ENCODE measurements at regions of chr9 and their contacts with region 1.

Region 1: DNA sequence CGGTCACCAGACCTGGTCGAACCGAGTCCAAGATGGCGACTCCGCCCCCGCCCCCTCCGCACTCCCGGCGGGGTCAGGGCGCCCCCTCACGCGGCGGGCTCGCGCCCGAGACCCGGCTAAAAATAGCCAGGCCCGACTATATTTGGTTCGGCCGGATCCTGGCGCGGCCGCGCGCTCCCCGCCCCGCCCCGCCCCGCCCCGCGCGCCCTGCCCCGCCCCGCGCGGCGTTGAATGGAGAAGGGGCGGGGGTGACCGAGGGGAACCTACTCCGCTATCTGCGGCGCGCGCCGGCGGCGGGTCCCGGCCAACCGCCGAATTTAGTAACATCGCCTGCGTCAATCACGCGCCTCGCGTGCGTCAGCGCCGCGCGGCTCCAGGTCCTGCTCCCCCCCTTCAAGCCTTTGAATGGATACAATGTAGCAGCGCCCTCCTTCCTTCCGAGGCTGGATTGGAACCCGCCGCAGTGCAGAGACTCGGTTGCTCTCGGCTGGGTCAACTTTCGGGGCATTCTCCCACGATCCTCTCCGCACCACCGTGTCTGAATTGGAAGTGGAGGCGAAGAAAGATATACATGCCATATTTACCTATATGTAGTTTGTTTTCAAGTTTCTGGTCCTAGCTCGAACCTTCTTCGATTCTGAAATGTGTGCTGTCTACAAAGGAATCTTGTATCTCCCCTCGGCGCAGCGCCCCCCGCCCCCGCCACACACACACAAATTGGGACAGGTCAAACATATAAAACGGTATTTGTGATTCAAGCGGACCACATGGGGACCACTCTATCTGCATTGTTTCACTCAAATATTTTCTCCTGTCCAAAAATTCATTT is 1.6 kb upstream of the NR4A3 start:
- DNase-seq: peak; percentile 94 to 95
- ATAC-seq: peak; percentile 67 to 80 (median 73)
- H3K4me3 ChIP-seq: peak overlapping the region; percentile 67 to 90 (median 82)
- H3K27ac ChIP-seq: peak overlapping the region; percentile 84 to 100 (median 98)
- H3K4me1 ChIP-seq: peaks cover 5 to 54% (median 32%) of the 10 kb centered on the region in 9 donors
- H3K27me3 ChIP-seq: peaks cover 0 to 30% (median 9%) of the 10 kb centered on the region in 7 donors
- CTCF ChIP-seq: peak in 5 of 9 donors; percentile 8 to 47 (median 34)

Region 2: GRCh38 chr9:99221621-99222415 is 598.3 kb before region 1 on chr9 and contains the starts of genes ALG2 and SEC61B:
- intact Hi-C with region 1: loop called in 1 of 10 experiments (anchors 10 kb)
- DNase-seq: peak; percentile 93 to 97
- ATAC-seq: peak; percentile 98 to 99 (median 99)
- H3K4me3 ChIP-seq: peak within 1 kb of the TSS; percentile 65 to 97 (median 88)
- H3K27ac ChIP-seq: peak within 1 kb of the TSS; percentile 87 to 96 (median 93)
- H3K4me1 ChIP-seq: peaks cover 14 to 85% (median 72%) of the 10 kb centered on the region in 9 donors
- H3K27me3 ChIP-seq: no peaks in the 10 kb centered on the region
- CTCF ChIP-seq: peak in 1 of 9 donors; percentile 21
- total RNA-seq, gene ALG2: 10.6 to 27.3 (median 15.0) TPM
- total RNA-seq, gene SEC61B: 24.1 to 72.6 (median 32.9) TPM

Region 3: GRCh38 chr9:99368341-99369323 is 451.4 kb before region 1 on chr9:
- intact Hi-C with region 1: loop called in 2 of 10 experiments (anchors 10 kb)
- DNase-seq: peak; percentile 62 to 80
- ATAC-seq: peak; percentile 92 to 98 (median 96)
- H3K4me3 ChIP-seq: peak overlapping the region in 9 of 10 donors; percentile 31 to 60 (median 51)
- H3K27ac ChIP-seq: peak overlapping the region; percentile 80 to 94 (median 85)
- H3K4me1 ChIP-seq: peaks cover 0 to 23% (median 13%) of the 10 kb centered on the region in 9 donors
- H3K27me3 ChIP-seq: peaks cover 0 to 4% (median 0%) of the 10 kb centered on the region in 7 donors
- CTCF ChIP-seq: no peak

Region 4: DNA sequence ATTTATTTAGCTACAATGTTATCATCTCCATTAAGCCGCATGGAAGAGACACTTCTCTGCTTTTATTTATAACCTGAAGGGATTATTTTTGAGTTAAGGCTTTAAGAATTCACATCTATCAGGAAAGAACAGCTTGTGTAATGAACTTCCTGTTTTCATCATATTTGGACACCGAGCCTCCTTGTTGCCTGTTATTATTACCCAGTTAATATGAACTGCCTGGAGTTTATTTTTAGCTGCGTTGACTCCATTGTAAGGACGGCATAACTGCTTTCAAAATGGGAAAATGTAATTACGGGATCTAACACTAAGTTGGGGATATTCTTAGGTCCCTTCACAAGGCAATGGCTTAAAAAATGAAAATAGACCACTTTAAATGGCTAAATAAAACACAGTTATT is 87.4 kb before region 1 on chr9:
- intact Hi-C with region 1: loop called in 1 of 10 experiments (anchors 5 kb)
- DNase-seq: no peak
- ATAC-seq: peak; percentile 55 to 95 (median 74)
- H3K4me3 ChIP-seq: peak overlapping the region in 5 of 10 donors; percentile 13 to 25 (median 17)
- H3K27ac ChIP-seq: peak overlapping the region in 9 of 10 donors; percentile 14 to 77 (median 57)
- H3K4me1 ChIP-seq: peaks cover 0 to 37% (median 14%) of the 10 kb centered on the region in 9 donors
- H3K27me3 ChIP-seq: no peaks in the 10 kb centered on the region
- CTCF ChIP-seq: no peak

Region 5: GRCh38 chr9:99999797-100000196 is 179.7 kb after region 1 on chr9:
- intact Hi-C with region 1: loop called in 1 of 10 experiments (anchors 10 kb)
- DNase-seq: no peak
- ATAC-seq: no peak
- H3K4me3 ChIP-seq: no peak overlapping the region
- H3K27ac ChIP-seq: no peak overlapping the region
- H3K4me1 ChIP-seq: no peaks in the 10 kb centered on the region
- H3K27me3 ChIP-seq: no peaks in the 10 kb centered on the region
- CTCF ChIP-seq: no peak

Region 6: DNA sequence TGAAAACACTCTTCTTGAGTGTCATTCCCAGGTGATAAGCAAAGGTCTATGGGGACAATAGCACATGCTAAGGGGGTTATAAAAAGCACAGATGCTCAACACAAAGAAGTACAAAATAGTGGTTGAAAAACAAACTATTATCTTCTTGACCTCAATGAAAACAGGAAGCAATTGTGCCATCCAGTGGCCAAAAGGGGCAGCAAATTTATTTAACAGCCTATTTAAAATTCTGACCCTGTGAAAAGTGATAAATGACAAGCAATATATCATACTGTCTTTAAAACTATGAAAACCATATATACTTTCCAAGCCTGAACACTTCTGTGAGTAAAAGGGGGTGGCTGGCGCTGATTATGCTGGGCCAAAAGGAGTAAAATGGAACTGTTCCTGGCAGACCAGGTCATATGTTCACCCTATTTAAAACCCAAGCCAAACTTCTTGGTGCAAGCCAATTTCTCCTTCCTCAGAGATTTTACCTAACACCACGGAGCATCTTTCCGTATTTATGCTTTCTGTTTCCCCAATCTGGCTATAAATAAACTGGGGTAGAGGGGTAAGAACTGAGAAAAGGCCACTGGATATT is 503.0 kb after region 1 on chr9:
- intact Hi-C with region 1: loop called in 1 of 10 experiments (anchors 10 kb)
- DNase-seq: no peak
- ATAC-seq: peak in 1 of 8 donors; percentile 29
- H3K4me3 ChIP-seq: no peak overlapping the region
- H3K27ac ChIP-seq: no peak overlapping the region
- H3K4me1 ChIP-seq: peaks cover 0 to 5% (median 0%) of the 10 kb centered on the region in 9 donors
- H3K27me3 ChIP-seq: no peaks in the 10 kb centered on the region
- CTCF ChIP-seq: peak; percentile 43 to 74 (median 67)

Measured in heart right ventricle (tissue), 16 donors.